Caco-2 (cell line): ENCODE measurements at regions of chr1 and their contacts with region 1.

Region 1: GRCh38 chr1:145927063-145927886 is at the start of gene RBM8A:
- DNase-seq: peak; percentile 95 to 97
- H3K4me3 ChIP-seq: peak within 1 kb of the TSS; percentile 84
- H3K4me3 Mint-ChIP-seq: no peak within 1 kb of the TSS
- H3K27ac Mint-ChIP-seq: no peak within 1 kb of the TSS
- H3K4me1 ChIP-seq: peaks cover 3% of the 10 kb centered on the region
- H3K4me1 Mint-ChIP-seq: peaks cover 6% of the 10 kb centered on the region
- H3K27me3 ChIP-seq: no peaks in the 10 kb centered on the region
- H3K27me3 Mint-ChIP-seq: no peaks in the 10 kb centered on the region
- CTCF ChIP-seq: peak; percentile 73 to 74
- total RNA-seq, gene RBM8A: 178 and 185 TPM in 2 replicates

Region 2: DNA sequence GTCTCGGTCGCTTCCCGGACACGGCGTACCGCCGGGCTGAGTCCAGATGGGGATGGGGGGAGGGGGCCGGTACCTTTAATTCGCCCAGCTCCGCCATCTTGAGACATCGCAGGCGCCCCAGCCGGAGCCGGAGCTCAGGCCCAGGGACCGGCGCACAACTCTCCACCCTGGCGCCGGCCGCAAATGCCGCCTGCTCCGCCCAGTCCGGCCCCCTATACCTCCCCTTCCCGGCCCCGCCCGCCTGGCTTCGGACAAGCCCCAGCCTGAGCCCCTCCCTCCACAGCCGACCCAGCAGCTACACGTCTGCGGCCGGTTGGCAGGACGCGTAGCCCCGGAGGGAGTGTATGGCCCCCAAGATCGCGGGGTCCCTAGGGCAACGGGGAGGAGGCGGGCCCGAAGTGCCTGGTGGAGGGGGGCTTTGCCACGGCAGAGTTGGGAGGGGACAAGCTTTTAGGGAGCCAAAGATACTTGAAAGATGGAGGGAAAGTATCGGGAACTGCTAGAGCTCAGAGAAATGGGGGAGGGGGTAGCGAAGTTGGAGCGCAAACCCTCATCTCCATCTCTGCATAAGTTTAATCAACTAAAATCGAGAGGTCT is 68.3 kb before region 1 on chr1 and contains the start of gene PIAS3:
- CTCF ChIA-PET with region 1: interaction called, 5 read pairs
- POLR2A ChIA-PET with region 1: interaction called, 17 read pairs
- intact Hi-C with region 1: no loop called
- DNase-seq: peak; percentile 96 to 97
- H3K4me3 ChIP-seq: peak within 1 kb of the TSS; percentile 85
- H3K4me3 Mint-ChIP-seq: peak within 1 kb of the TSS; percentile 92
- H3K27ac Mint-ChIP-seq: peak within 1 kb of the TSS; percentile 78
- H3K4me1 ChIP-seq: peaks cover 3% of the 10 kb centered on the region; the same call in 1 of the 2 replicates
- H3K4me1 Mint-ChIP-seq: peaks cover 7% of the 10 kb centered on the region
- H3K27me3 ChIP-seq: no peaks in the 10 kb centered on the region
- H3K27me3 Mint-ChIP-seq: no peaks in the 10 kb centered on the region
- CTCF ChIP-seq: no peak
- total RNA-seq, gene PIAS3: 20.3 and 22.0 TPM in 2 replicates

Region 3: GRCh38 chr1:145957443-145958319 is 30.4 kb after region 1 on chr1 and contains the start of gene LIX1L:
- CTCF ChIA-PET with region 1: interaction called, 15 read pairs
- POLR2A ChIA-PET with region 1: interaction called, 14 read pairs
- intact Hi-C with region 1: loop called (anchors 2 kb)
- DNase-seq: peak; percentile 91 to 92
- H3K4me3 ChIP-seq: peak within 1 kb of the TSS; percentile 46
- H3K4me3 Mint-ChIP-seq: peak within 1 kb of the TSS; percentile 68
- H3K27ac Mint-ChIP-seq: no peak within 1 kb of the TSS
- H3K4me1 ChIP-seq: peaks cover 21% of the 10 kb centered on the region
- H3K4me1 Mint-ChIP-seq: peaks cover 20% of the 10 kb centered on the region
- H3K27me3 ChIP-seq: no peaks in the 10 kb centered on the region; the same call in 1 of the 2 replicates
- H3K27me3 Mint-ChIP-seq: peaks cover 14% of the 10 kb centered on the region
- CTCF ChIP-seq: no peak
- total RNA-seq, gene LIX1L: 0.82 and 1.1 TPM in 2 replicates

Region 4: GRCh38 chr1:146007506-146008133 is 80.3 kb after region 1 on chr1:
- CTCF ChIA-PET with region 1: no interaction called
- POLR2A ChIA-PET with region 1: no interaction called
- intact Hi-C with region 1: no loop called
- DNase-seq: no peak
- H3K4me3 ChIP-seq: no peak overlapping the region
- H3K4me3 Mint-ChIP-seq: no peak overlapping the region
- H3K27ac Mint-ChIP-seq: no peak overlapping the region
- H3K4me1 ChIP-seq: 0 out of 2 replicates have a peak, but pooled peaks cover 3% of the 10 kb centered on the region
- H3K4me1 Mint-ChIP-seq: peaks cover 5% of the 10 kb centered on the region
- H3K27me3 ChIP-seq: no peaks in the 10 kb centered on the region
- H3K27me3 Mint-ChIP-seq: no peaks in the 10 kb centered on the region
- CTCF ChIP-seq: no peak